Activated naive CD4-positive, alpha-beta T cell treated with anti-CD3 and anti-CD28 coated beads for 36 hours (primary cell): ENCODE measurements at regions of chr9 and their contacts with region 1.

Region 1: GRCh38 chr9:96854073-96854876 is at the start of gene ZNF782:
- DNase-seq: peak; percentile 91
- H3K4me3 Mint-ChIP-seq: peak within 1 kb of the TSS; percentile 100
- H3K27ac Mint-ChIP-seq: peak within 1 kb of the TSS; percentile 97
- H3K4me1 Mint-ChIP-seq: peaks cover 35% of the 10 kb centered on the region
- H3K27me3 Mint-ChIP-seq: peaks cover 8% of the 10 kb centered on the region
- total RNA-seq, gene ZNF782: 2.2 to 2.8 TPM

Region 2: GRCh38 chr9:96449845-96450612 is 404.2 kb before region 1 on chr9 and contains the start of gene HABP4:
- CTCF ChIA-PET with region 1: no interaction called
- intact Hi-C with region 1: loop called (anchors 10 kb)
- DNase-seq: peak; percentile 95
- H3K4me3 Mint-ChIP-seq: peak within 1 kb of the TSS; percentile 85
- H3K27ac Mint-ChIP-seq: peak within 1 kb of the TSS; percentile 66
- H3K4me1 Mint-ChIP-seq: peaks cover 29% of the 10 kb centered on the region
- H3K27me3 Mint-ChIP-seq: peaks cover 4% of the 10 kb centered on the region
- total RNA-seq, gene HABP4: 7.3 to 7.9 TPM

Region 3: DNA sequence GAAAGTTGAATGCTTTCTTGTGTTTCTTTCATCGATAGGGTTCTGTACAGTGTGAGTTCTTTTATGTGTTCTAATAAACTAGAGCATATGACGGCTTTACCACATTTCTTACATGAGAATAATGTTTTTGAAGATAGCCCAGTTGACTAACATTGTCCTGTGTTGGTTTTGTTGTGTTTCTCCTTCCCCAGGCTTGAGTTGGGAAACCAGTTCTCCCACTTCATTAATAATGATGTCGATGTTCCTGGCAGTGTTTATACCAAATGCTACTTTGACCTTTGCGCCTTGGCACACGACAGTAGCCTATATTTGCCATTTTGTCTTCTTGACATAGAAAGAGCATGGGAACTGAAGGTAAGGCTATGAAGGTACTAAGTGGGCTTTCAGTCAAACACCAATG is 14.4 kb after region 1 on chr9:
- CTCF ChIA-PET with region 1: interaction called, 11 read pairs
- intact Hi-C with region 1: no loop called
- DNase-seq: no peak
- H3K4me3 Mint-ChIP-seq: no peak overlapping the region
- H3K27ac Mint-ChIP-seq: no peak overlapping the region
- H3K4me1 Mint-ChIP-seq: no peaks in the 10 kb centered on the region
- H3K27me3 Mint-ChIP-seq: peaks cover 3% of the 10 kb centered on the region

Region 4: GRCh38 chr9:97109194-97109811 is 255.0 kb after region 1 on chr9:
- CTCF ChIA-PET with region 1: interaction called, 16 read pairs
- intact Hi-C with region 1: loop called (anchors 1 kb)
- DNase-seq: peak; percentile 77
- H3K4me3 Mint-ChIP-seq: no peak overlapping the region
- H3K27ac Mint-ChIP-seq: no peak overlapping the region
- H3K4me1 Mint-ChIP-seq: no peaks in the 10 kb centered on the region
- H3K27me3 Mint-ChIP-seq: no peaks in the 10 kb centered on the region

Region 5: GRCh38 chr9:97348866-97349265 is 494.6 kb after region 1 on chr9:
- CTCF ChIA-PET with region 1: no interaction called
- intact Hi-C with region 1: no loop called
- DNase-seq: no peak
- H3K4me3 Mint-ChIP-seq: no peak overlapping the region
- H3K27ac Mint-ChIP-seq: no peak overlapping the region
- H3K4me1 Mint-ChIP-seq: no peaks in the 10 kb centered on the region
- H3K27me3 Mint-ChIP-seq: no peaks in the 10 kb centered on the region

Region 6: DNA sequence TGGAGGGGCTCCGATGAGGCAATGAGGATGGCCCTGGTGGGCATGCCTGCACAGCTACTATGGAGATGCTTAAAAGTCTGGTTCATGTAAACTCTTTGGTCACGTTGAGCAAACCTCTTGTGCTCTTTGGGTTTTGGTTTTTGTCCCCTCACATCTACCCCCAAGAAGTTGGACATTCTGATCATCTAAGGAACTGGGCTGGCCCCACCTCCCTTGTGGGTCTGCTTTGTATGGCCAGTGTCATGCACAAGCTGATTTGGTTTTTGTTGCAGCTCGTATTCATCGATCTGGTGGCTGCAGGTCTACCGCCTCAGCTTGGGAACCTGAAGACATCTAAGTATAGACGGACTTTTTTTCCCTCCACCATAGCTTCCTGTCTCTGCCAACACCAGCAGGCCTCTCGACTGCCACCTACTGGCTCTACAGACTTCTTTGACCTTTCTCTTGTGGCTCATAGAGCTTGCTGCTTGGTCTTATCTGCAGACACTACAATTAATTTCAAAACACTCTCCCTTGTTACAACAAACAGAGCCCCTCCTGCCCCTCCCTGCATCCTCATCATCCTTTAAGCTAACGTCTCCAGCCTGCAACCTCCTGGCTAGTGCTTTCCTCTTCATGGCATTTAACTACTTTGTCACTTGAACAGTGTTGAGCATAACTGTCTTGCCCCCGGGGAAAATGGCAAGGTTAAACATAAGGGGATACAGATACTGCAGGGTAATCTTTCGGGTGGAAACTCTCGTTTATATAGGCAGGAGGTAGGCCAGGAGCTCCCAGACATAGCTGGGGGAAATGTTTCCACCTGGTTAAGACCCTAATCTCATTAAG is 744.4 kb after region 1 on chr9:
- CTCF ChIA-PET with region 1: interaction called, 8 read pairs
- intact Hi-C with region 1: loop called (anchors 1 kb)
- DNase-seq: peak; percentile 87
- H3K4me3 Mint-ChIP-seq: no peak overlapping the region
- H3K27ac Mint-ChIP-seq: no peak overlapping the region
- H3K4me1 Mint-ChIP-seq: peaks cover 4% of the 10 kb centered on the region
- H3K27me3 Mint-ChIP-seq: no peaks in the 10 kb centered on the region